ENCODE measurements at regions of chr1 and their contacts with region 1.

Region 1: DNA sequence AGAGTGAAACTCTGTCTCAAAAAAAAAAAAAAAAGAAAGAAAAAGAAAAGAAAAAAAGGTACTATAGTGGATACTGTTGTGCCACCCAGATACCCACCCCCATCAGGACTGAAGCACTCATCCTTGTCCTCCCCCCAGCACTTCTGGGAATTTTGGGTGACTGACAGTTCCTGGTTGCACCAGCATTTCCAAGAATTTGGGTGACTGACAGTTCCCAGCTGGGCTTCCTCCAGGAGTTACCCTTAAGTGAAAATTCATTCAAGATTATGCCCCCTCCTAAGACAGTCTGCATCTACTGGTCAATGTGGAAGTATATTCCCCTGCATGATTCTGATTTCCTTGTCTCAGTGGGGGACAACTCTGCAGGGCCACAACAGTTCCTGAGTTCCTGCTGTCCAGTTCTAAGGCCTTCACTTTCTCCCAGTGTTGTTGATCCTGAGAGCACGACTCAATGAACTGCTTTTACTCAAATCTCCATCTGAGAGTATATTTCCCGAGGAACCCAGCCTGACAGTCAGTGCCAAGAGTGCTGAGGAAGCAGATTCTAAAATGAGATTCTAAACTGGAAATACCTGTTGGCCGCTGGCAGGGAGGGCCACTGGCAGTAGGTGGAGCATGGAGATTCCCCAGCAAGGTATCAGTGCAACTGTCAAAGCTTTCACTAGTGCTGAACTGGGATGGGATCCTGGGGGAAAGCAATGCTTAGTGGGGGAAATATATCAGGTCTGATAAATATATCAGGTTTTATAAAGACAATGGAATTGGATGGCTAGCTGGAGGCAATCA is 18.5 kb downstream of the RIIAD1 start:
- DNase-seq: no peak
- H3K4me3 Mint-ChIP-seq: no peak overlapping the region
- H3K27ac Mint-ChIP-seq: no peak overlapping the region
- H3K4me1 Mint-ChIP-seq: peaks cover 6% of the 10 kb centered on the region
- H3K27me3 Mint-ChIP-seq: peaks cover 30% of the 10 kb centered on the region
- CTCF ChIP-seq: no peak

Region 2: DNA sequence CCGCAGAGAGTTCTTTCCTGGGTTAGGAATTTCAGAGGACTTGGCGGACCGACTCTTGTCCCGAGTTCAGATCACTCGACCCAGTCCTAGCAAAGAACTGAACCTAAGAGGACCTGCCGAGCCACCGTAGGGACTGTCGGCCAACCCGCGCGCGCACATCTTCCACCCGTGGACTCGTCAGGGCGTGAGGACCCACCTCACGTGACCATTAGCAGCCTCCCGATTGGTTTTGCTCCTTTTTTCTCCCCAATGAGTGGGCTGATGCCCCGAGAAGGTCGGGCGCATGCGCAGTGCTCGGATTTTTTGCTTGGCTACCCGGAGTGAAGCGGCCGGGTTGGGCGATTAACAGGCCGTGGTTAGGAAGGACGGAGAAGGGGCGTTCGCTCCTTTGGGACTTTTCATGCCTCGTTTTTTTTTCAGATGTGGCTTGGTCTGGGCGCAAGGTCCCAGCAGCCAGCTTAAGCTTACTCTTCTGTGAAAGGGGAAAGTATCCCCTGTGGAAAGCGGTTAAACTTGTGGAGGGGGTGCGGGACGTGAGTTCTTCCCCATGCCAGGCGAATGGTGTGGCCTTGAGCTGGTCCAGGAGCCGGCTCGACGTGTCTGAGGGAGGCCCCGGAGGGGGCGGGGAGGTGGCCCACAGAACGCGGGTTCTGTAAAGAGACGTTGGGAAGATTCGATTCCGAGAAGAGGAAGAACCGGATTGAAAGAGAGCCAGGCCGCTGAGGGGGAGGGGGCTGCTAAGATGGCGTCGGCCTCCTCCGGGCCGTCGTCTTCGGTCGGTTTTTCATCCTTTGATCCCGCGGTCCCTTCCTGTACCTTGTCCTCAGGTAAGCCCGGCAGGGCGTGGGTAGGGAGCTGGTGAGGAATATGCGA is 541.3 kb before region 1 on chr1 and contains the start of gene PIP5K1A:
- CTCF ChIA-PET with region 1: no interaction called
- POLR2A ChIA-PET with region 1: interaction called, 3 read pairs
- intact Hi-C with region 1: loop called (anchors 10 kb)
- DNase-seq: peak; percentile 100
- H3K4me3 Mint-ChIP-seq: peak within 1 kb of the TSS; percentile 93
- H3K27ac Mint-ChIP-seq: peak within 1 kb of the TSS; percentile 95
- H3K4me1 Mint-ChIP-seq: peaks cover 40% of the 10 kb centered on the region
- H3K27me3 Mint-ChIP-seq: no peaks in the 10 kb centered on the region
- CTCF ChIP-seq: no peak
- total RNA-seq, gene PIP5K1A: 150 and 163 TPM in 2 replicates

Region 3: GRCh38 chr1:151443846-151444782 is 295.7 kb before region 1 on chr1:
- CTCF ChIA-PET with region 1: interaction called, 25 read pairs
- POLR2A ChIA-PET with region 1: interaction called, 8 read pairs
- intact Hi-C with region 1: loop called (anchors 1 kb)
- DNase-seq: peak; percentile 94
- H3K4me3 Mint-ChIP-seq: no peak overlapping the region
- H3K27ac Mint-ChIP-seq: no peak overlapping the region
- H3K4me1 Mint-ChIP-seq: peaks cover 24% of the 10 kb centered on the region
- H3K27me3 Mint-ChIP-seq: no peaks in the 10 kb centered on the region
- CTCF ChIP-seq: peak; percentile 93

Region 4: GRCh38 chr1:151611832-151612500 is 127.8 kb before region 1 on chr1 and contains the start of gene SNX27:
- CTCF ChIA-PET with region 1: interaction called, 10 read pairs
- POLR2A ChIA-PET with region 1: interaction called, 5 read pairs
- intact Hi-C with region 1: no loop called
- DNase-seq: peak; percentile 96
- H3K4me3 Mint-ChIP-seq: peak within 1 kb of the TSS; percentile 89
- H3K27ac Mint-ChIP-seq: peak within 1 kb of the TSS; percentile 88
- H3K4me1 Mint-ChIP-seq: peaks cover 60% of the 10 kb centered on the region
- H3K27me3 Mint-ChIP-seq: no peaks in the 10 kb centered on the region
- CTCF ChIP-seq: no peak
- total RNA-seq, gene SNX27: 36.9 and 43.1 TPM in 2 replicates

Region 5: DNA sequence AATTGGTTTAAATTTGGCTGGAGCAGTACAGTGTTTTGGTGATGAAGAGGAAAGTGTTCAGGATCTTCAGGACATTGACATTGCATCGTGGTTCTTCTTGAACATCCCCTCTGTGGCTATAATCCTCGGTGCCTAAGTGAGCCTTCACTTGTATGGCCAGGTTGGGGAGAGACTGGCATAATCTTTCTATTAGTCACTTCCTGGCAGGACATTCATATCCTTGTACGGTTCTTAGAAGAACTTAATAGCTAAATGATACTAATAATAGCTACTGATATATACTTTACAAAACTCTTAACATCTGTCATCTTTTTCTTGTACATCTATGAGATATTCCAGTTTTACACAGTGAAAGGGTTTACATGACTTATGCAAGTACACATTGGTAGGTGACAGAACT is 59.0 kb before region 1 on chr1:
- CTCF ChIA-PET with region 1: interaction called, 20 read pairs
- POLR2A ChIA-PET with region 1: no interaction called
- intact Hi-C with region 1: no loop called
- DNase-seq: peak; percentile 80
- H3K4me3 Mint-ChIP-seq: no peak overlapping the region
- H3K27ac Mint-ChIP-seq: peak overlapping the region; percentile 73
- H3K4me1 Mint-ChIP-seq: peaks cover 18% of the 10 kb centered on the region
- H3K27me3 Mint-ChIP-seq: no peaks in the 10 kb centered on the region
- CTCF ChIP-seq: no peak

Region 6: DNA sequence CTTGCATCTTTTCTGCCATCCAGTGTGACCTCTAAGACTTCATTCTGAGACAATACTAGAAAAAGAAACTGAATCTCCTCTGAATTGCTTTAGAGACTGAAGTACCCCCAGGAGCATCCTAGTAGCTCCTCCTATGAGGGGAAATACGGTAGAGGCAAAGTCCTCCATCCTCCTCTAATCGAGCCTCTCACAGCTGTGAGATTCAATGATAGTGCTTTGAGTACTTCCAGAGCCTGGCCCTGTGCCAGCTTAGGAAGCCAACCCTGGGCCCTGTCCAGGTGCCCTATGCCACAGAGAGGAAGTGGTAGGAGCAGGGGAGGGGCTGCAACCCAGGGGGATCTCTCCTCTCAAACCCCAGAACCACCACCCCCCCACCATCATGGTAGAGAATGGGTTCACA is 81.2 kb after region 1 on chr1:
- CTCF ChIA-PET with region 1: no interaction called
- POLR2A ChIA-PET with region 1: no interaction called
- intact Hi-C with region 1: no loop called
- DNase-seq: peak; percentile 71
- H3K4me3 Mint-ChIP-seq: no peak overlapping the region
- H3K27ac Mint-ChIP-seq: no peak overlapping the region
- H3K4me1 Mint-ChIP-seq: peaks cover 16% of the 10 kb centered on the region
- H3K27me3 Mint-ChIP-seq: no peaks in the 10 kb centered on the region
- CTCF ChIP-seq: no peak

Region 7: GRCh38 chr1:151909150-151910149 is 169.7 kb after region 1 on chr1 and contains the start of gene THEM4:
- CTCF ChIA-PET with region 1: no interaction called
- POLR2A ChIA-PET with region 1: no interaction called
- intact Hi-C with region 1: no loop called
- DNase-seq: peak; percentile 99
- H3K4me3 Mint-ChIP-seq: peak within 1 kb of the TSS; percentile 99
- H3K27ac Mint-ChIP-seq: peak within 1 kb of the TSS; percentile 99
- H3K4me1 Mint-ChIP-seq: peaks cover 17% of the 10 kb centered on the region
- H3K27me3 Mint-ChIP-seq: no peaks in the 10 kb centered on the region
- CTCF ChIP-seq: peak; percentile 25
- total RNA-seq, gene THEM4: 27.5 and 29.1 TPM in 2 replicates

Region 8: GRCh38 chr1:152089014-152089676 is 349.4 kb after region 1 on chr1 and contains the start of gene TCHHL1:
- CTCF ChIA-PET with region 1: no interaction called
- POLR2A ChIA-PET with region 1: no interaction called
- intact Hi-C with region 1: no loop called
- DNase-seq: no peak
- H3K4me3 Mint-ChIP-seq: no peak within 1 kb of the TSS
- H3K27ac Mint-ChIP-seq: no peak within 1 kb of the TSS
- H3K4me1 Mint-ChIP-seq: no peaks in the 10 kb centered on the region
- H3K27me3 Mint-ChIP-seq: no peaks in the 10 kb centered on the region
- CTCF ChIP-seq: no peak
- total RNA-seq, gene TCHHL1: not detected in 2 replicates

Measured in MCF 10A (cell line).